ENCODE measurements at regions of chr11 and their contacts with region 1.

Region 1: DNA sequence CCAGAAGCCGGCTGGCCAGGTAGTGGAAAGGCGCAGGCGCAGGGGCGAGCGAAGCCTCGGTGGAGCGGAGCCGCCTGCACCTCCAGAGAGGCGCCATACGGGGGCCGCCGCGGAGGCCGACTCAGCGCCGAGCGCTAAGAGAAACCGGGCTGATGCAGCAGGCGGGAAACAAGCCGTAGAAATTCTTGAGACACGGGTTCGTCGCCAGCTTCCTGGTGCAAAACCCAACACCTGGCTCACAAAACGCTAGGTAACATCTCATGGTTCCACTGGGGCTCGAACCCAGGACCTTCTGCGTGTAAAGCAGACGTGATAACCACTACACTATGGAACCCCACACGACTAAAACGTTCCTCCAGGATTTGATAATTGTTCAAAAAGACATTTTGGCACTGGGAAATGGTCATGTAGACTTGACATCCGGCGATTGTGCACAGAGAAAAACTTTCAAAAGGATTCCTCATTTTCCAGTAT is 39.1 kb downstream of the OR4D9 start:
- DNase-seq: peak; percentile 96
- ATAC-seq: peak; percentile 96
- H3K4me3 ChIP-seq: peak overlapping the region; percentile 74
- H3K27ac ChIP-seq: peak overlapping the region; percentile 83
- H3K4me1 ChIP-seq: no peaks in the 10 kb centered on the region
- H3K27me3 ChIP-seq: no peaks in the 10 kb centered on the region
- CTCF ChIP-seq: peak; percentile 39 to 59 (median 57)
- EP300 ChIP-seq: peak in 1 of 2 experiments; percentile 57; a peak in 1 of 4 replicates
- POLR2A ChIP-seq: peak; percentile 40; the same call in 1 of the 2 replicates
- RAD21 ChIP-seq: no peak

Region 2: DNA sequence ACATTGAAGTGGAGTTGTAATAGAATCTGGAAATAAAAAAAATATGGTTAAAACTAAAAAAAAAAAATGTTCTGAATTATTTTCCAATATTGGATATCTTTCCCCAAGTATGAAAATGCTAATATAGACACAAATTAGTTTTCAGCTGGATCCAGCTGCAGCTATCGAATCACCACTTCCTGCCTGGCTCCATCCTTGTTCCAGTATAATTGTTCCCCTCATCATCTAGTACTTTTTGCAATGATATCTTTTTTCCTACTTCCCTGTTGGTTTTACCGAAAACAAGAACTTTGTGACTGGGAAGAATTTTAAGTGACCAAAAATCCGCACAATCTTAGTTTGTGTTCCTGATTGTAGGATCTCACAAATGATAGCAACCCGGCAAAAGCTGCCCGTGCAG is 29.7 kb before region 1 on chr11:
- CTCF ChIA-PET with region 1: no interaction called
- POLR2A ChIA-PET with region 1: no interaction called
- RAD21 ChIA-PET with region 1: no interaction called
- SMC1A ChIA-PET with region 1: no interaction called
- in situ Hi-C with region 1: no loop called
- intact Hi-C with region 1: no loop called
- DNase-seq: no peak
- ATAC-seq: no peak
- H3K4me3 ChIP-seq: no peak overlapping the region
- H3K27ac ChIP-seq: no peak overlapping the region
- H3K4me1 ChIP-seq: no peaks in the 10 kb centered on the region
- H3K27me3 ChIP-seq: no peaks in the 10 kb centered on the region
- CTCF ChIP-seq: no peak
- EP300 ChIP-seq: no peak
- POLR2A ChIP-seq: no peak
- RAD21 ChIP-seq: no peak

Region 3: GRCh38 chr11:59615637-59616395 is 65.4 kb after region 1 on chr11 and contains the start of gene OSBP:
- CTCF ChIA-PET with region 1: interaction called, 3 read pairs
- POLR2A ChIA-PET with region 1: interaction called, 3 read pairs
- RAD21 ChIA-PET with region 1: interaction called, 7 read pairs
- SMC1A ChIA-PET with region 1: interaction called, 21 read pairs
- in situ Hi-C with region 1: no loop called
- intact Hi-C with region 1: loop called (anchors 5 kb)
- DNase-seq: peak; percentile 100
- ATAC-seq: peak; percentile 93
- H3K4me3 ChIP-seq: peak within 1 kb of the TSS; percentile 91
- H3K27ac ChIP-seq: peak within 1 kb of the TSS; percentile 69
- H3K4me1 ChIP-seq: no peaks in the 10 kb centered on the region; the same call in none of the 2 replicates
- H3K27me3 ChIP-seq: no peaks in the 10 kb centered on the region
- CTCF ChIP-seq: no peak
- EP300 ChIP-seq: no peak
- POLR2A ChIP-seq: peak; percentile 89
- RAD21 ChIP-seq: no peak
- polyA plus RNA-seq, gene OSBP: 9.8 to 10.7 TPM

Region 4: DNA sequence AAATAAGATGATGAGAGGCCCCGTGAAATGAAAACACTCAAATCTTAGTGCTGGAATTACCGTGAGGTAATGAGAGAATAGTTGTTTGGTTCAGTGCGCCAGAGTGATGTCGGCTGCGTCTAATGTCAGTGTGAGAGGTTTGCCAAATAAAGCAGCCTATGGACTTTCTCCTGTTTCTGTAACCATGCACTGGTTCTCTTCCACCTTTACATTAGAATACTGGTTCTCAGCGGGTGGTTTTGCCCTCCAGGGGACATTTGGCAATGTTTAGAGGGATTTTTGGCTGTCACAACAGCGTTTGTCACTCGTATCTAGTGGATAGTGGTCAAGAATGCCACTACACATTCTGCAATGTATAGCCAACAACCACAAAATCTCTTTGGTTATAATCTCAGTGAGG is 467.7 kb after region 1 on chr11:
- CTCF ChIA-PET with region 1: no interaction called
- POLR2A ChIA-PET with region 1: no interaction called
- RAD21 ChIA-PET with region 1: no interaction called
- SMC1A ChIA-PET with region 1: no interaction called
- in situ Hi-C with region 1: no loop called
- intact Hi-C with region 1: no loop called
- DNase-seq: no peak
- ATAC-seq: no peak
- H3K4me3 ChIP-seq: no peak overlapping the region
- H3K27ac ChIP-seq: no peak overlapping the region
- H3K4me1 ChIP-seq: no peaks in the 10 kb centered on the region
- H3K27me3 ChIP-seq: no peaks in the 10 kb centered on the region
- CTCF ChIP-seq: no peak
- EP300 ChIP-seq: no peak
- POLR2A ChIP-seq: no peak
- RAD21 ChIP-seq: no peak

Region 5: DNA sequence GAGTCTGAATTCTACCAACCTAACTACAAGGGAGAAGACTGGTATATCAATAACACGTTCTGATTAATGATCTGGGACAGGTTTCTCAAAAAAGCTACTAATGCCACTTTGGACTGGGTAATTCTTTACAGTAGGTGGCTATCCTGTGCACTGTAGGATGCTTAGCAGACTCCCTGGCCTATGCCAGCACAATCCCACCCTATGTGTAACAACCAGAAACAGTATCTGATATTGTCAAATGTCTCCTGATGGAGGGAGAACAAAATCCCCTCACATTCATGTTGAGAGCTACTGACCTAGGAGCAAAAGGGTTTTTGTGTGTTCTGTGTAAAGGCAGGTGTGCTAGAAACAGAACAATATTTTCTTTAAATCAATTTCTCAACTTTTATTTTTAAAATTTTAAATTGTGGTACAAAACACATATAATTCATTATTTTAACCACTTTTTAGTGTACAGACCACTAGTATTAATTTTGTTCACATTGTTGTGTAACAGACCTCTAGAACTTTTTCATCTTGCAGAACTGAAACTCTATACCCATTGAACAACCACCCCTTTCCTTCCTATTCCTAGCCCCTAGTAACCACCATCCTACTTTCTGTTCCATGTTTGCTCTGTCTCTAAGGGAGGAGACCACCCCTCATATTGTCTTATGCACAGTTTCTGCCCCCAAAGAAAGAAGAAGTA is 634.6 kb after region 1 on chr11:
- CTCF ChIA-PET with region 1: no interaction called
- POLR2A ChIA-PET with region 1: no interaction called
- RAD21 ChIA-PET with region 1: no interaction called
- SMC1A ChIA-PET with region 1: no interaction called
- in situ Hi-C with region 1: loop called (anchors 10 kb)
- intact Hi-C with region 1: no loop called
- DNase-seq: peak; percentile 53
- ATAC-seq: peak; percentile 86
- H3K4me3 ChIP-seq: no peak overlapping the region
- H3K27ac ChIP-seq: no peak overlapping the region
- H3K4me1 ChIP-seq: peaks cover 16% of the 10 kb centered on the region
- H3K27me3 ChIP-seq: no peaks in the 10 kb centered on the region
- CTCF ChIP-seq: no peak
- EP300 ChIP-seq: 0 out of 4 replicates have a peak, but pooled peaks of 1 of the 2 experiments have one; percentile 37
- POLR2A ChIP-seq: no peak
- RAD21 ChIP-seq: no peak

Region 6: GRCh38 chr11:61378713-61379313 is 1828.4 kb after region 1 on chr11:
- CTCF ChIA-PET with region 1: no interaction called
- POLR2A ChIA-PET with region 1: no interaction called
- RAD21 ChIA-PET with region 1: no interaction called
- SMC1A ChIA-PET with region 1: no interaction called
- in situ Hi-C with region 1: no loop called
- intact Hi-C with region 1: no loop called
- DNase-seq: no peak
- ATAC-seq: no peak
- H3K4me3 ChIP-seq: no peak overlapping the region
- H3K27ac ChIP-seq: no peak overlapping the region
- H3K4me1 ChIP-seq: no peaks in the 10 kb centered on the region
- H3K27me3 ChIP-seq: no peaks in the 10 kb centered on the region
- CTCF ChIP-seq: no peak
- EP300 ChIP-seq: no peak
- POLR2A ChIP-seq: no peak
- RAD21 ChIP-seq: no peak